Panc1 (cell line): ENCODE measurements at regions of chr10 and their contacts with region 1.

Region 1: GRCh38 chr10:103918053-103918846 is at the start of gene STN1:
- DNase-seq: peak; percentile 76
- ATAC-seq: peak; percentile 98
- H3K4me3 ChIP-seq: peak within 1 kb of the TSS; percentile 86 to 90
- H3K27ac ChIP-seq: peak within 1 kb of the TSS; percentile 98
- H3K4me1 ChIP-seq: peaks cover 28% of the 10 kb centered on the region
- H3K27me3 ChIP-seq: no peaks in the 10 kb centered on the region
- CTCF ChIP-seq: no peak
- total RNA-seq, gene STN1: 28.9 TPM

Region 2: GRCh38 chr10:103564776-103565520 is 353.3 kb before region 1 on chr10:
- CTCF ChIA-PET with region 1: no interaction called
- POLR2A ChIA-PET with region 1: no interaction called
- in situ Hi-C with region 1: no loop called
- intact Hi-C with region 1: no loop called
- DNase-seq: no peak
- ATAC-seq: peak; percentile 82
- H3K4me3 ChIP-seq: no peak overlapping the region
- H3K27ac ChIP-seq: no peak overlapping the region
- H3K4me1 ChIP-seq: no peaks in the 10 kb centered on the region
- H3K27me3 ChIP-seq: no peaks in the 10 kb centered on the region
- CTCF ChIP-seq: peak; percentile 95

Region 3: GRCh38 chr10:103745341-103746227 is 172.7 kb before region 1 on chr10:
- CTCF ChIA-PET with region 1: no interaction called
- POLR2A ChIA-PET with region 1: no interaction called
- in situ Hi-C with region 1: no loop called
- intact Hi-C with region 1: no loop called
- DNase-seq: no peak
- ATAC-seq: peak; percentile 44
- H3K4me3 ChIP-seq: no peak overlapping the region
- H3K27ac ChIP-seq: no peak overlapping the region
- H3K4me1 ChIP-seq: no peaks in the 10 kb centered on the region
- H3K27me3 ChIP-seq: no peaks in the 10 kb centered on the region
- CTCF ChIP-seq: no peak

Region 4: DNA sequence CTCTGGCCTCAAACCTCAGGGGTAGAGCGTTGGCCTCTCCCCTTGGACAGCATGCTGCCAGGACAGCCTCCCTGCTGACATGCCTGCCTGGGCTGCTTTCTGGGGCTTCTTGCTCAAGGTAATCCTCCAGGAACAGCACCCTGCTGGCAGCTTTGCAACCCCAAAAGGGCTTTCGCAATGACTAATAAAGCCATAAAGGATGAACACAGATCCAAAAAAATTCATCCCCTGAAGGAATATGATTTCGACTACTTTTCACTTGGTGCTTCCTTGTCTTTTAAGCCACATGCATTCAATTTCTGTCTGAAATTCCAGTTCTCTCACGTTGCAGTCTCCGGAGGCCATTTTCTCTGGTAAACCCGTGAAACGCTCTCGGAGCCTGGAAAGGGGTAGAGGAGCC is 47.7 kb before region 1 on chr10:
- CTCF ChIA-PET with region 1: no interaction called
- POLR2A ChIA-PET with region 1: no interaction called
- in situ Hi-C with region 1: no loop called
- intact Hi-C with region 1: no loop called
- DNase-seq: no peak
- ATAC-seq: 0 out of 2 replicates have a peak, but pooled peaks have one; percentile 47
- H3K4me3 ChIP-seq: no peak overlapping the region
- H3K27ac ChIP-seq: no peak overlapping the region
- H3K4me1 ChIP-seq: no peaks in the 10 kb centered on the region
- H3K27me3 ChIP-seq: no peaks in the 10 kb centered on the region
- CTCF ChIP-seq: no peak

Region 5: GRCh38 chr10:103958996-103959395 is 40.7 kb after region 1 on chr10:
- CTCF ChIA-PET with region 1: no interaction called
- POLR2A ChIA-PET with region 1: interaction called, 12 read pairs
- in situ Hi-C with region 1: no loop called
- intact Hi-C with region 1: no loop called
- DNase-seq: no peak
- ATAC-seq: no peak
- H3K4me3 ChIP-seq: no peak overlapping the region
- H3K27ac ChIP-seq: no peak overlapping the region
- H3K4me1 ChIP-seq: no peaks in the 10 kb centered on the region
- H3K27me3 ChIP-seq: no peaks in the 10 kb centered on the region
- CTCF ChIP-seq: no peak